Endothelial cell of umbilical vein (primary cell): ENCODE measurements at regions of chr5 and their contacts with region 1.

Region 1: DNA sequence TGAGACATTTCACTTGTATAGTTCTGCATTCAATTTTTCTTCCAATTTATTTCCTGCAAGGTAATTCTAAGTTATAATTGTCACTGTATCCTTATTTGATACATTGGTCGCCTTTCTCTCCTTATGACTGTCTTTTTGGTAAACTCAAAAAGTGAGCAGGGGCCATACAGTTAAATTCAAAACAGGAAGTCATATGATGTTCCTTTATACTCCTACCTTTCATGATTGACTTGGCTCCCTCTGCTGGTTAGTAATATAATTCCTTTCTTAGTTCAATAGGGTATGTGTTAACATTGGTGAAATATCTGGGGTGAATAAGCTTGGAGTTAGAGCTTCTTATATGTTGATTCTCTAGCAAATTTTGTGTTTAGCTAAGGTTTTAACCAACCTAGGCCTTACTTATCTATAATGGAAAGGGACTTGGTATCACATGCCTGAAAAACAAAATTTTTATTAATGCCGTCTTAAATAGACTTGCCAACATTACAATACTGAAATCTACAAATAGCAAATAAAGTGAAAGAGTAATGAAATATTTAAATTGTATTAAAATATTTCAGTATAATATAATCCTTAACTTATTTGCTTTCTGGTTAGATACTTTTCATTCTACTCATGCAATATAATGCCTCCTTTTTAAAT is 6.0 kb upstream of the NIPBL start:
- DNase-seq: peak; percentile 58
- H3K4me3 ChIP-seq: no peak overlapping the region
- H3K27ac ChIP-seq: no peak overlapping the region
- H3K4me1 ChIP-seq: peaks cover 17% of the 10 kb centered on the region
- H3K27me3 ChIP-seq: no peaks in the 10 kb centered on the region
- CTCF ChIP-seq: peak; percentile 37 to 40
- POLR2A ChIP-seq: no peak

Region 2: DNA sequence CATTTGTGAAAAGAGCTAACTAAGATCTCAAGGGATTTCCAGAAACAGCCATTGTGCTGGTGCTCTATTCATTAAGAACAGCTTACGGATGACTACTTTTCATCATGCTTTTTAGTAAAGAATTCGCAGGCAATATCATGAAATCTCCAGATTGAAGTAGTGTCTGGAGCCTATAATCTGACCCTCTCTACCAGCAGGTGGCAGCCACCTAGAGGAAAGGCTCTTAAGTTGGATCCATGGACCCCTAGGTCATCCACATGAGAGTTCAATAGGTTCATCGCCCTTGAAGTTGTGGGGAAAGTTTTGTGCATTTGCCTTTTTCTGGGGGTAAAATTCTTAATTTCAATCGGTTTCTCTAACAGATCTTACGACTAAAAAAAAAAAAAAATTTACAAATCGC is 181.8 kb before region 1 on chr5:
- CTCF ChIA-PET with region 1: no interaction called
- POLR2A ChIA-PET with region 1: no interaction called
- dilution Hi-C with region 1: no loop called
- intact Hi-C with region 1: no loop called
- DNase-seq: no peak
- H3K4me3 ChIP-seq: no peak overlapping the region
- H3K27ac ChIP-seq: no peak overlapping the region
- H3K4me1 ChIP-seq: no peaks in the 10 kb centered on the region
- H3K27me3 ChIP-seq: peaks cover 2 to 3% of the 10 kb centered on the region in 2 experiments
- CTCF ChIP-seq: peak; percentile 13 to 26
- POLR2A ChIP-seq: no peak

Region 3: GRCh38 chr5:36728697-36729543 is 141.6 kb before region 1 on chr5:
- CTCF ChIA-PET with region 1: interaction called, 13 read pairs
- POLR2A ChIA-PET with region 1: no interaction called
- dilution Hi-C with region 1: no loop called
- intact Hi-C with region 1: no loop called
- DNase-seq: peak; percentile 68
- H3K4me3 ChIP-seq: no peak overlapping the region
- H3K27ac ChIP-seq: no peak overlapping the region
- H3K4me1 ChIP-seq: no peaks in the 10 kb centered on the region
- H3K27me3 ChIP-seq: peaks cover 0 to 3% of the 10 kb centered on the region in 2 experiments
- CTCF ChIP-seq: peak; percentile 38 to 52
- POLR2A ChIP-seq: no peak